ENCODE measurements at regions of chr14 and their contacts with region 1.

Region 1: GRCh38 chr14:73365727-73366126 is 92.6 kb downstream of the NUMB start:
- DNase-seq: no peak
- ATAC-seq: no peak
- H3K4me3 ChIP-seq: no peak overlapping the region
- H3K4me3 Mint-ChIP-seq: no peak overlapping the region
- H3K27ac ChIP-seq: no peak overlapping the region
- H3K27ac Mint-ChIP-seq: no peak overlapping the region
- H3K4me1 ChIP-seq: no peaks in the 10 kb centered on the region
- H3K4me1 Mint-ChIP-seq: no peaks in the 10 kb centered on the region
- H3K27me3 ChIP-seq: no peaks in the 10 kb centered on the region
- H3K27me3 Mint-ChIP-seq: no peaks in the 10 kb centered on the region
- CTCF ChIP-seq: no peak

Region 2: DNA sequence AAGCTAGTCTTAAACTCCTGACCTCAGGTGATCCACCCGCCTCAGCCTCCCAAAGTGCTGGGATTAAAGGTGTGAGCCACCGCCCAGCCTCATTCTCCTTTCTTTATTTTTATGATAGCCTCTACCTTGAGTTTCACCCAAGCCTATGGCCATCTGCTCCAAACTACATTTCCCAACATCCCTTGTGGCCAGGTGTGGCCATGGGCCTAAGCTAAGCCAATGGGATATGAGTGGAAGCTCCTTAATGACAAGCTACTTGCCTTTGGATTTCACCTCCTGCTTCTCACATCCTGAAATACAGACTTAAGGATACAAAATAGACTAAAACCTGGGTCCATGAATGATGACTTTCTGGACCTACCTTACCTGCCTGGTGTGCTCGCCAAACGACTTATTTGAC is 518.0 kb before region 1 on chr14:
- CTCF ChIA-PET with region 1: no interaction called
- POLR2A ChIA-PET with region 1: no interaction called
- intact Hi-C with region 1: no loop called
- DNase-seq: no peak
- ATAC-seq: no peak
- H3K4me3 ChIP-seq: no peak overlapping the region
- H3K4me3 Mint-ChIP-seq: no peak overlapping the region
- H3K27ac ChIP-seq: no peak overlapping the region
- H3K27ac Mint-ChIP-seq: no peak overlapping the region
- H3K4me1 ChIP-seq: no peaks in the 10 kb centered on the region
- H3K4me1 Mint-ChIP-seq: no peaks in the 10 kb centered on the region
- H3K27me3 ChIP-seq: no peaks in the 10 kb centered on the region
- H3K27me3 Mint-ChIP-seq: peaks cover 5% of the 10 kb centered on the region
- CTCF ChIP-seq: no peak

Region 3: DNA sequence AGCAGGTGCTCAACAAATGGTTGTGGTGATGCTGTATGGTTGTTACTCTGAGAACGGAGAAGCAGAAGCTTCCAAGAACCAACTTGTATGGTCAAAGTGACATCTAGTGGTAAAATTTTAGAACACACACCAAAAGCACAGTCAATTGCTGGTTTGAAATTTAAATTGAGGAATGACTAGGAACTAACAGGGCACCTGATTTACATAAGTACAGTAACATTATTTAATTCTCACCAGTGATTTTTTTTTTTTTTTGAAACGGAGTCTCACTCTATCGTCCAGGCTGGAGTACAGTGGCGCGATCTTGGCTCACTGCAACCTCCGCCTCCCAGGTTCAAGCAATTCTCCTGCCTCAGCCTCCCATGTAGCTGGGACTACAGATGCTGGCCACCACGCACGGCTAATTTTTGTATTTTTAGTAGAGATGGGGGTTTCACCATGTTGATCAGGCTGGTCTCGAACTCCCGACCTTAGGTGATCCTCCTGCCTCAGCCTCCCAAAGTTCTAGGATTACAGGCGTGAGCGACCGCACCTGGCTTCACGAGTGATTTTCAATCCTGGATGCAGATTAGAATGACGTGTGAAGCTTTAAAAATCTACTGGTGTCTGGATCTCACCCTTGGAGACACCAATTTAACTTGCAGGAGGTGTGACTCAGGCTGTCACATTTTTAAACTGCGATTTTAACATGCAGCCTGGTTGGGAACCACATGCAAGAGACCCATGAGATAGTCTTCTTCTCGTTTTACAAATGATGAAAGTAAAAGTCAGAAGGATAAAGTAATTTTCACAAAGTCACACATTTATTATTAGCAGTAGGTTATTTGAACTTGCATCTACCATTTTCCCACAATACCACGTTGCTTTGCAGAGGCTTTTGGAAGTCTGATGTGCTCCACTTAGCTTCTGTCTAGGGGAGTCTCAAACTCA is 106.7 kb after region 1 on chr14:
- CTCF ChIA-PET with region 1: no interaction called
- POLR2A ChIA-PET with region 1: no interaction called
- intact Hi-C with region 1: no loop called
- DNase-seq: peak in 3 of 14 experiments; percentile 72 to 79 (median 76)
- ATAC-seq: peak; percentile 87
- H3K4me3 ChIP-seq: no peak overlapping the region
- H3K4me3 Mint-ChIP-seq: no peak overlapping the region
- H3K27ac ChIP-seq: no peak overlapping the region
- H3K27ac Mint-ChIP-seq: no peak overlapping the region
- H3K4me1 ChIP-seq: peaks cover 6% of the 10 kb centered on the region
- H3K4me1 Mint-ChIP-seq: peaks cover 4% of the 10 kb centered on the region
- H3K27me3 ChIP-seq: no peaks in the 10 kb centered on the region
- H3K27me3 Mint-ChIP-seq: no peaks in the 10 kb centered on the region
- CTCF ChIP-seq: peak; percentile 75

Region 4: GRCh38 chr14:74444866-74445265 is 1079.1 kb after region 1 on chr14:
- CTCF ChIA-PET with region 1: no interaction called
- POLR2A ChIA-PET with region 1: no interaction called
- intact Hi-C with region 1: loop called in 1 of 2 experiments (anchors 5 kb)
- DNase-seq: no peak
- ATAC-seq: no peak
- H3K4me3 ChIP-seq: no peak overlapping the region
- H3K4me3 Mint-ChIP-seq: no peak overlapping the region
- H3K27ac ChIP-seq: no peak overlapping the region
- H3K27ac Mint-ChIP-seq: no peak overlapping the region
- H3K4me1 ChIP-seq: no peaks in the 10 kb centered on the region
- H3K4me1 Mint-ChIP-seq: no peaks in the 10 kb centered on the region
- H3K27me3 ChIP-seq: no peaks in the 10 kb centered on the region
- H3K27me3 Mint-ChIP-seq: peaks cover 20% of the 10 kb centered on the region
- CTCF ChIP-seq: no peak